Gastrocnemius medialis (tissue), 4 donors: ENCODE measurements at regions of chr15 and their contacts with region 1.

Region 1: GRCh38 chr15:90320061-90320884 is 31.8 kb upstream of the ZNF774 start:
- DNase-seq: peak; percentile 65 to 82
- ATAC-seq: peak; percentile 79 to 83
- H3K4me3 ChIP-seq: peak overlapping the region in 2 of 4 donors; percentile 10 to 37
- H3K27ac ChIP-seq: peak overlapping the region in 3 of 4 donors; percentile 2 to 56 (median 40)
- H3K4me1 ChIP-seq: peaks cover 12 to 16% of the 10 kb centered on the region in 2 donors
- H3K27me3 ChIP-seq: no peaks in the 10 kb centered on the region
- CTCF ChIP-seq: peak; percentile 94 to 99 (median 98)
- POLR2A ChIP-seq: no peak

Region 2: GRCh38 chr15:90138071-90138833 is 182.0 kb before region 1 on chr15:
- in situ Hi-C with region 1: no loop called
- intact Hi-C with region 1: no loop called
- DNase-seq: peak in 1 of 2 donors; percentile 53
- ATAC-seq: peak; percentile 62 to 88
- H3K4me3 ChIP-seq: no peak overlapping the region
- H3K27ac ChIP-seq: peak overlapping the region in 3 of 4 donors; percentile 0 to 31 (median 24)
- H3K4me1 ChIP-seq: peaks cover 5 to 11% of the 10 kb centered on the region in 2 donors
- H3K27me3 ChIP-seq: no peaks in the 10 kb centered on the region
- CTCF ChIP-seq: no peak
- POLR2A ChIP-seq: no peak

Region 3: GRCh38 chr15:90482124-90483011 is 162.1 kb after region 1 on chr15:
- in situ Hi-C with region 1: loop called in 2 of 4 experiments (anchors 10 to 25 kb)
- intact Hi-C with region 1: loop called (anchors 1 kb)
- DNase-seq: no peak
- ATAC-seq: peak in 1 of 2 donors; percentile 35
- H3K4me3 ChIP-seq: no peak overlapping the region
- H3K27ac ChIP-seq: peak overlapping the region in 2 of 4 donors; percentile 11 to 44
- H3K4me1 ChIP-seq: no peaks in the 10 kb centered on the region
- H3K27me3 ChIP-seq: no peaks in the 10 kb centered on the region
- CTCF ChIP-seq: peak; percentile 57 to 75 (median 60)
- POLR2A ChIP-seq: no peak

Region 4: DNA sequence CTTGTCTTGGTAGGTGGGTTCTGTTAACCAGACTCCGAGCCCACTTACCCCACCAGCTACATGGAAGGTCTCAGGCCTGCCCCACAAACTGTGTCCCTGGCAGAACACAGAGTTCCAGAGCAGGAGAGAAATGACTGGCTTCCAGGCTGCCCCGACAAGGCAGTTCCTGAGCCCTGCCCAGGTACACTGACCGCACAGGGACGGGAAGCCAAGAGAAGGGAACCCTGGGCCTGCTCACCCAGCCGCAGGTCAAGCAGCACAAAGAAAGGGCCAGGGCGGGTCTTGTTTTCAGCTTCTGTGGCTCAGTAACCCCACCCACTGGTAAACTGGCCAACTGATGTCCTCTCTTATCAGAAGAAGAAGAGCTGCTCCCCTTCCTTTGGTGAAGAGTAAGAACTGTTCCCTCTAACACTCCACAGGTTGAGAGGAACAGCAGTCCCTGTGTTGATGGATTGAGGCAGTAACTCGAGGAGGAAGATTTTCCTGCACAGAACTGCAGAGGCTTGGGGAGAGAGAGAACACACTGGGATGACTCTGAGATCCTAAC is 277.8 kb after region 1 on chr15:
- in situ Hi-C with region 1: loop called in 2 of 4 experiments (anchors 25 kb)
- intact Hi-C with region 1: loop called (anchors 5 kb)
- DNase-seq: peak; percentile 67 to 86
- ATAC-seq: peak; percentile 74 to 75
- H3K4me3 ChIP-seq: peak overlapping the region in 1 of 4 donors; percentile 32
- H3K27ac ChIP-seq: peak overlapping the region; percentile 58 to 83 (median 74)
- H3K4me1 ChIP-seq: peaks cover 42 to 55% of the 10 kb centered on the region in 2 donors
- H3K27me3 ChIP-seq: no peaks in the 10 kb centered on the region
- CTCF ChIP-seq: no peak
- POLR2A ChIP-seq: no peak

Region 5: DNA sequence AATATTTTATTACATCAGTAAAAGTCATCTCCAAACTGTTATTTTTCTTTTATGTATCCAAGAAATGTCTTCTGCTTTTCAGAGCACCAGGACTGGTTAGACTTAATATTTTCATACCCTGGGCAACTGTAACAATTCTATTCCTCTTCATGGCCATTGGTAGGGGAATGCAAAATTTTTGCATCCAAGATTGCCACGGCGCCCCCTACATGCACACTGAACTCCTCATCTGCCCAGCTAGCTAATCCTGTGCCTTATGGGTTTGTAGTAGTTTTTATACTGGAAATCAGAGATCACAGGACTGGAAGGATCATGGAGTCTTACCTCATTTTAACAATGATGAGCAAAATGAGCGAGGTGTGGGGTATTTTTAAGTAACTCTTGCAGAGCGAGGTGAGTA is 283.6 kb after region 1 on chr15:
- in situ Hi-C with region 1: loop called in 2 of 4 experiments (anchors 25 kb)
- intact Hi-C with region 1: loop called (anchors 5 kb)
- DNase-seq: no peak
- ATAC-seq: no peak
- H3K4me3 ChIP-seq: no peak overlapping the region
- H3K27ac ChIP-seq: no peak overlapping the region
- H3K4me1 ChIP-seq: peaks cover 5 to 6% of the 10 kb centered on the region in 2 donors
- H3K27me3 ChIP-seq: no peaks in the 10 kb centered on the region
- CTCF ChIP-seq: no peak
- POLR2A ChIP-seq: no peak